Activated CD8-positive, alpha-beta T cell treated with anti-CD3 and anti-CD28 coated beads for 36 hours (primary cell): ENCODE measurements at regions of chr4 and their contacts with region 1.

Region 1: GRCh38 chr4:26330186-26330787 is 9.5 kb downstream of the RBPJ start:
- DNase-seq: no peak
- ATAC-seq: peak; percentile 78
- H3K4me3 Mint-ChIP-seq: no peak overlapping the region
- H3K27ac Mint-ChIP-seq: no peak overlapping the region
- H3K4me1 Mint-ChIP-seq: peaks cover 42% of the 10 kb centered on the region
- H3K27me3 Mint-ChIP-seq: no peaks in the 10 kb centered on the region
- CTCF ChIP-seq: peak; percentile 81

Region 2: DNA sequence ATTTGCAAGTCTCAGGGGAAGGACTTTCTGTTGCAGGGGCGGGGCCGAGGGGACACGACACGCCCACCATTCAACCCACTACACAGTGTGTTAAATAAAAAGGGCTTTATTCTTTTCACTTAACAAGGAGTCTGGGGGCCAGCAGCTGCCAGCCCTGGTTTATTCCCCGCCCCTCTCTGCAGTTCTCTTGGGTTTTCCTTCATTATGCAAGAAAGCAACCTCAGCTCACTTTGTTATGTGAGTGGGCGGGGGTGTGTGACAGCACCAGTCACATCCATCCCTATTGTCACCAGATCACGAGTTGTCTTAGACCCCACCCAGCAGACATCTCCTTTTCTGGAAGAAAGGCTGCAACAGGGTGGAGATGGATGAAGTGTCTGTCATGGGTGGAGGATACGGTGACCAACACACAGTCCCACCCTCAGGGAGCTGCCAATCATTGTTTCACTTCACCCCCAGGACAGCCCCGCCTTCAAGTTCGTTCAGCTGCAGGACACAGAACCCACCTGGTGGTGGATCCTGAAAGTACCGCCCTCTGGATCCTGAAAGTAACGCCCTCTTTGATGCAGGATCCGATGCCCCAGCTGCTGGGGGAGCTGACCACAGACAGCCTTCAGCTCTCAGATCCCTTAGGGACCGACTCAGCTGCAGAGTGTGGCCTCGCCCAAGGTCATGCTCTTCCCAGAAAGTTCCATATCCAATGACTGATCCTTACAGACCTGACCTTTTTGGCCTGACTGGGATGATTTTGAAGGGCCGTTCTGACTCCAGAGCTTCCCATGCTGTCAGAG is 336.7 kb before region 1 on chr4:
- CTCF ChIA-PET with region 1: interaction called, 23 read pairs
- POLR2A ChIA-PET with region 1: interaction called, 3 read pairs
- intact Hi-C with region 1: no loop called
- DNase-seq: peak; percentile 60
- ATAC-seq: peak; percentile 90
- H3K4me3 Mint-ChIP-seq: no peak overlapping the region
- H3K27ac Mint-ChIP-seq: no peak overlapping the region
- H3K4me1 Mint-ChIP-seq: peaks cover 10% of the 10 kb centered on the region
- H3K27me3 Mint-ChIP-seq: peaks cover 3% of the 10 kb centered on the region
- CTCF ChIP-seq: peak; percentile 43

Region 3: DNA sequence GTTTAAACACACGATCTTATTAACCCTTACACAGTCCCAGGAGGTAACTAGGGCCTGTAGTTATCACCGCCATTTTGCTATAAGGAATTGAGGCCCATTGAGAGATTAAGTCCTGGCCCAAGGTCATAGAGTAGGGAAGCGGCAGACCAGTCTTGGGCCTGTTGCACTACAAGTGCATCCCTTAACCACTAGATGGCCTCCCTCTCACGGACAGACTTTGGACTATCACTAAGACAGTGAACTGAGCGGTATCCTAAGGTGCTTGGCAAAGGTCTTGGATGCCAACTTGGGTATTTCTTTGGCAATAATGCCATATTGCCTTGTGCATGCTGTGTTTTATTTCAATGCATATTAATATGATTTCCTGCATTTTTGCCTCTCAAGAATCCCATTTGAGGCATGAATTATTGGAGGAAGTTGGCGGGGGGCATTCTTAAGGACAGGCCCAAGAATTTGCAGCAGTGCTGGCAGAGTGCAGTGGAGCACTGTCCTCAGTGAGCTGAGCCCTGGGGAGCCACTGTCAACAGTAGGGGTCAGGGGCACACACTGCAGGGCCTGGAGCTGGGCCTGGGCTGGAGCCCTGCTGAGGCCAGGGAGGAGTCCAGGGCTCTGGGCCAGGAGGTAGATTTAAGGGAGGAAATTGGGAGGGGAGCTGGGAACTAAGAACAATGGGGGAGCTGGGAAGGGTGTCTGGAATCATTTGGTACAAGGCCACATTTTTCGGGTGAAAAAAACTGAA is 268.9 kb before region 1 on chr4:
- CTCF ChIA-PET with region 1: interaction called, 12 read pairs
- POLR2A ChIA-PET with region 1: no interaction called
- intact Hi-C with region 1: no loop called
- DNase-seq: peak; percentile 44
- ATAC-seq: peak; percentile 71
- H3K4me3 Mint-ChIP-seq: no peak overlapping the region
- H3K27ac Mint-ChIP-seq: no peak overlapping the region
- H3K4me1 Mint-ChIP-seq: peaks cover 14% of the 10 kb centered on the region
- H3K27me3 Mint-ChIP-seq: peaks cover 9% of the 10 kb centered on the region
- CTCF ChIP-seq: peak; percentile 50

Region 4: GRCh38 chr4:26342328-26343037 is 12.2 kb after region 1 on chr4:
- CTCF ChIA-PET with region 1: interaction called, 58 read pairs
- POLR2A ChIA-PET with region 1: no interaction called
- intact Hi-C with region 1: no loop called
- DNase-seq: no peak
- ATAC-seq: no peak
- H3K4me3 Mint-ChIP-seq: no peak overlapping the region
- H3K27ac Mint-ChIP-seq: no peak overlapping the region
- H3K4me1 Mint-ChIP-seq: peaks cover 53% of the 10 kb centered on the region
- H3K27me3 Mint-ChIP-seq: no peaks in the 10 kb centered on the region
- CTCF ChIP-seq: no peak

Region 5: GRCh38 chr4:26410385-26411293 is 80.4 kb after region 1 on chr4:
- CTCF ChIA-PET with region 1: interaction called, 116 read pairs
- POLR2A ChIA-PET with region 1: interaction called, 3 read pairs
- intact Hi-C with region 1: loop called (anchors 1 kb)
- DNase-seq: peak; percentile 33
- ATAC-seq: peak; percentile 61
- H3K4me3 Mint-ChIP-seq: no peak overlapping the region
- H3K27ac Mint-ChIP-seq: no peak overlapping the region
- H3K4me1 Mint-ChIP-seq: peaks cover 7% of the 10 kb centered on the region
- H3K27me3 Mint-ChIP-seq: no peaks in the 10 kb centered on the region
- CTCF ChIP-seq: peak; percentile 85